ENCODE measurements at regions of chr9 and their contacts with region 1.

Region 1: DNA sequence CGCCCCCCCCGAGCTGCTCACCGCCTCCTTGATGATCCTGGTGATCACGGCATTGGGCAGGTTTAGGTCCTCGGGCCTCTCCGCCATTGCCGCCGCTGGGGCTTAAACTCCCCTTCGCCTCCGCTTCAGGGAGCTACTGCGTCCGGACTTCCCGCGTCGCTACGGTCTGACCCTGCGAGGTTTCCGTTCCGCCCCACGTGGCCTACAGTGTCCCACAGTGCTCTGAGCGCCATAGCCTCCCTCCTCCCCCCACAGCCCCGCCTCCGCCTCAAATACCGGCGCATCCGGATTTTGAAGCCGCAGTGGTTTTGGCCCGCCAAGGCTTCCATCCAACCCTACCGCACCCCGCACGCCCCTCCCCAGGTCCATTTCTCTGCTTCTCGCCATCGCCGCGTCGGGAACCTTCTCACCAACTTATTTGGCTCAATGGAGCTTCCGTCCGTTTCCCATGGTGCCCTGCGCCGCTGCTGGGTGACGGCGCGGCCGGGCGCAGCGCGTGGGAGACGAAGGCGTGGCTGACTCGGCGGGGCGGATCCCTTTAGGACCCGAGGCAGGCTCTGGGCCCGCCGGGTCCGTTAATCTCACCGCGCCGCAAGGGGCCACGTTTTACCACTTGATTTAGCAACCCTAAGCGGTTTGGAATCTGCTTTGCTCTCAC is at the starts of genes C9orf43 and POLE3:
- DNase-seq: peak; percentile 96
- total RNA-seq, gene C9orf43: 0.16 TPM
- total RNA-seq, gene POLE3: 16.9 TPM

Region 2: GRCh38 chr9:113221003-113221799 is 189.1 kb before region 1 on chr9 and contains the starts of genes FKBP15 and SLC31A1:
- intact Hi-C with region 1: loop called (anchors 2 kb)
- DNase-seq: peak; percentile 99
- total RNA-seq, gene FKBP15: 17.9 TPM
- total RNA-seq, gene SLC31A1: 9.6 TPM